CD4-positive, alpha-beta memory T cell (primary cell): ENCODE measurements at regions of chr11 and their contacts with region 1.

Region 1: GRCh38 chr11:63553741-63554151 is 9.4 kb downstream of the PLAAT2 start:
- DNase-seq: peak; percentile 38 to 77 (median 52)
- H3K4me3 ChIP-seq: peak overlapping the region in 1 of 2 donors; percentile 53
- H3K4me3 Mint-ChIP-seq: peak overlapping the region; percentile 57 to 94 (median 89)
- H3K27ac ChIP-seq: peak overlapping the region; percentile 62
- H3K27ac Mint-ChIP-seq: peak overlapping the region; percentile 84 to 98 (median 95)
- H3K4me1 ChIP-seq: peaks cover 38% of the 10 kb centered on the region
- H3K4me1 Mint-ChIP-seq: peaks cover 37 to 56% (median 45%) of the 10 kb centered on the region in 4 donors
- H3K27me3 ChIP-seq: no peaks in the 10 kb centered on the region
- H3K27me3 Mint-ChIP-seq: no peaks in the 10 kb centered on the region

Region 2: GRCh38 chr11:63518548-63518947 is 35.2 kb before region 1 on chr11:
- CTCF ChIA-PET with region 1: no interaction called
- POLR2A ChIA-PET with region 1: interaction called, 17 read pairs
- intact Hi-C with region 1: no loop called
- DNase-seq: peak in 4 of 5 donors; percentile 41 to 58 (median 48)
- H3K4me3 ChIP-seq: no peak overlapping the region
- H3K4me3 Mint-ChIP-seq: peak overlapping the region in 7 of 8 donors; percentile 15 to 55 (median 50)
- H3K27ac ChIP-seq: peak overlapping the region; percentile 3
- H3K27ac Mint-ChIP-seq: peak overlapping the region; percentile 65 to 93 (median 76)
- H3K4me1 ChIP-seq: peaks cover 18% of the 10 kb centered on the region
- H3K4me1 Mint-ChIP-seq: peaks cover 18 to 35% (median 26%) of the 10 kb centered on the region in 4 donors
- H3K27me3 ChIP-seq: no peaks in the 10 kb centered on the region
- H3K27me3 Mint-ChIP-seq: no peaks in the 10 kb centered on the region

Region 3: DNA sequence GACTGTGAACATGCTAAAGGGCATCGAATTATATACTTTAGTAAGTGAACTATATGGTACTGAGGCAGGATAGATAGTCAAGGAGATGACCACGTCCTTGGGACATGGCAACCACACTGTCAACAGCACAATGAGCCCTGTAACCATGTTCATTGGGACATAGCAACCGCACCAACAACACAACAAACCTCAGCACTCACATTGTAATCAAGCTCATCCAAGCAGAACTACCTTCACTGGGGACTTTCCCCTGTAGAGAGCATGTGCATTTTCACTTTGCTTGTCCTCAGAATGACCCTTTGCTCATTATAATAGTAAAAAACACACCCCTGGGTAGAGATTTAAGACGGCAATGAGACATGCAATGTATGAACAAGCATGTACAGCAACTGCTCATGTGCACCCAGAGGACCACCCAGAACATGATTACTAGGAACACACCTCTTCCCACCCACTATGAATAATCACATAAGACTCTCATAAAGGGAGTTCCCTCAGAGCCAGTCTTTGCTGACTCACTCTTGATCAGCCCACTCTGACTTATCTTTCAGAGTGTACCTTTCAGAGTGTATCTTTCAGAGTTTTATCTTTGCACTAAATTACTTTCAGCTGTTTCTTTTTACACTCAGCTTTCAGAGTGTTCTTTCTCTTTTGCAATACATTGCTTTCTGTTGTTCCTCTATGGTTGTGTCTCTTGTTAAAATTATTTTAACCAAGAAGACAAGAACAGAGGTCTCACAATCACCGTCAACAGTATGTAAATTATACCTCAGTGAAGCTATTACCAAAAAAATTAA is 13.5 kb after region 1 on chr11:
- CTCF ChIA-PET with region 1: interaction called, 4 read pairs
- POLR2A ChIA-PET with region 1: interaction called, 18 read pairs
- intact Hi-C with region 1: no loop called
- DNase-seq: peak; percentile 80 to 96 (median 90)
- H3K4me3 ChIP-seq: no peak overlapping the region
- H3K4me3 Mint-ChIP-seq: peak overlapping the region; percentile 23 to 79 (median 64)
- H3K27ac ChIP-seq: peak overlapping the region; percentile 74
- H3K27ac Mint-ChIP-seq: peak overlapping the region; percentile 90 to 99 (median 96)
- H3K4me1 ChIP-seq: peaks cover 44% of the 10 kb centered on the region
- H3K4me1 Mint-ChIP-seq: peaks cover 32 to 46% (median 36%) of the 10 kb centered on the region in 4 donors
- H3K27me3 ChIP-seq: no peaks in the 10 kb centered on the region
- H3K27me3 Mint-ChIP-seq: no peaks in the 10 kb centered on the region